ENCODE measurements at regions of chr3 and their contacts with region 1.

Region 1: DNA sequence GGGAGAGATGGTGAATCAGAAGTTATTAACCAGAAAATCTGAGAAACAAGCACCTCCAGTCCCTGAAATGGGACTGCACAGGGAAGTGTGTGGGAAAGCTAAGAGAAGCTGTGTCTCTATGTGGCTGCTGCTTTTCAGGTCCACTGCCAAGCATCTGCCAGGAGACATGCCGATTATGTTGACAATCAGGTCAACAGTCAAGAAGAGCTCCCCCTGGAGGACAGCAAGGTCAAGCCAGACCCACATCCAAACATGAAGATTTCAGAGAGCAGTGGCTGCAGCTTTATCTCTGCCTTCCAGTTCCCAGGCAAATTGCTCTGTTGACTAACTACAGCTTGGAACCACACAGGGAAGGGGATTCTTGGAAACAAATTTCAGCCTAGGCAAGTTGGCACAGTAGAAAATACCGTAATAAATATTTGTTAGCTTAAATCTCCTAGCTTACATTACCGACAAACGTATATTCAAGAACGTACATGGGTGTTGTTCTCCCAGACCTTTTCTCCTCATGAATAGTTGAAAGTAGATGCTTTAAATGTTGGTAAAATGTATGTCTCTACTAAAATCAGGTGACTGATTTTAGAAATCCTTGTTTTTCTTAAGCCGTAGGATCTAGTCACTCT is 394.5 kb upstream of the RARB start:
- DNase-seq: peak; percentile 34
- H3K4me3 Mint-ChIP-seq: no peak overlapping the region
- H3K27ac Mint-ChIP-seq: no peak overlapping the region
- H3K4me1 Mint-ChIP-seq: no peaks in the 10 kb centered on the region
- H3K27me3 Mint-ChIP-seq: no peaks in the 10 kb centered on the region

Region 2: DNA sequence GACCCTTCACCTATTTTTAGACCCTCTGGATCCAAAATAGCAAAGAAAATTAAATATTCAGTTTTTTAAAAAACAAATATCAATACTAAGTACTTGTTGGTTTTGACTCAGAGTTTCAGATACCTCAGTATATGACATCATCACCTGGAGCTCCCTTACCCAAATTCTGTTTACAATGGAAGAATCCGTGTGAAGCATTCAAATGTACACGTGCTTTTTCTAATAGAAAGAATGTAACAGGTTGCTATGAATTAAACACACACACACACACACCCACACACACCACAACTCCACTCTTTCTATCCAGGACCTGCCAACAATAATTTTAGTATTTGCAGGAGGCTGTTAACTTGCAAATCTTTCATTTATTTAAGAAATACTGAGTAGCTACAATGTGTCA is 760.6 kb before region 1 on chr3:
- CTCF ChIA-PET with region 1: no interaction called
- intact Hi-C with region 1: no loop called
- DNase-seq: no peak
- H3K4me3 Mint-ChIP-seq: no peak overlapping the region
- H3K27ac Mint-ChIP-seq: no peak overlapping the region
- H3K4me1 Mint-ChIP-seq: no peaks in the 10 kb centered on the region
- H3K27me3 Mint-ChIP-seq: peaks cover 11% of the 10 kb centered on the region

Region 3: DNA sequence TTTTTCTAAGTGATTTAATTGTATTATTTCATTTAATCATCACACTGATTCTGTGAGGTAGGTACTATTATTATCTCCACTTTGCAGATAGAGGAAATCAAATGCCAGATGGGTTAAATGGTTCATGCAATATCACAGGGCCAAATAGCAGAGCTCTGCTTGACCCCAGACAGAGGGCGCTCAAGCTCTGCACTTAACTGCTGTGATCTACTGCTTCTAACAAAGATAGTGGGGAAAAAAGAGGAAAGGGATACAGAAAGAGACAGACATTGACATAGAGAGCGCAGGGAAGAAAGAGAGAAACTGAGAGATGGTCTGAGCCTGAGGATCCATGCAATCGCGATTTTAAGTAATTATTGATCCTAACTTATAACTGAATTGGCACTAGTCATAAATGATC is 259.7 kb before region 1 on chr3:
- CTCF ChIA-PET with region 1: no interaction called
- intact Hi-C with region 1: loop called (anchors 5 kb)
- DNase-seq: peak; percentile 48
- H3K4me3 Mint-ChIP-seq: no peak overlapping the region
- H3K27ac Mint-ChIP-seq: no peak overlapping the region
- H3K4me1 Mint-ChIP-seq: no peaks in the 10 kb centered on the region
- H3K27me3 Mint-ChIP-seq: no peaks in the 10 kb centered on the region

Region 4: DNA sequence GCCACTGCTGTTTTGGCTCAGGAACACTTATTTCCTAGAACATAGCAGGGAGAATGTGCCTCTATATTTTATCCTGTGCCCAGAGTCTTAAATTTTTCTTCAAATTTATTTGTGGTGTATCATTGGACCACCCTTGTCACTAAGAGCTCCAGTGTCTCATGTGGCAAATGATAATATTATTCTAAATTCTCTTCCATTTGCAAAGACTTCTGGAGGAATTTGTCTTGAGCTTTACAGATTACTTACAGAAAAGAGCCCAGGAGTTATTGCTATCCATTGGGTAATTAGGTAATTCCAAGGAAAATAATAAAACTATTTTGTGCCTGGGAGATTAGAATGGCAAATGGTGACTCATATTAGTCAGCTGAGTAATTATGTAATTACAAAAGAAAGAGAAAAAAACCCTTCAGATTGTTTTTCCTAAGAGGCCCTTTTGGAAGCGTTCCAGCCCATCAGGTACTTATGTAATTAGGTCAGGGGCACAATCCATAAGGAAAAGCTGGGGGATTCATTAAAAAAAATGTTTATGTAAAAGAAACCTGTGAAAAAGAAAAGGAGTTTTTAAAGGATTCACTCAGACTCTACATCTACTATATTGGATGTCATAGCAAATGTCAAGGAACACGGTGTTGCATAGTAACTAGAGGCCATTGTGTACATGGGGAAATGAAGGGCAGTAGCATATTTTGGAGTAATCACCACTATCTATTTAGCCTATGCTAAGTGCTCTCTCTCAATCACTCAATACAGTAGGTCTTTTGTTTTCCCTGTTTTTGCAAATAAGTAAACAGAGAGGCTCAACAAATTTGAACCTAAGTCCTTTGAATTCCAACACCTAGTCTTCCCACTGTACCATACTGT is 13.6 kb after region 1 on chr3:
- CTCF ChIA-PET with region 1: interaction called, 10 read pairs
- intact Hi-C with region 1: no loop called
- DNase-seq: no peak
- H3K4me3 Mint-ChIP-seq: no peak overlapping the region
- H3K27ac Mint-ChIP-seq: no peak overlapping the region
- H3K4me1 Mint-ChIP-seq: no peaks in the 10 kb centered on the region
- H3K27me3 Mint-ChIP-seq: no peaks in the 10 kb centered on the region

Region 5: DNA sequence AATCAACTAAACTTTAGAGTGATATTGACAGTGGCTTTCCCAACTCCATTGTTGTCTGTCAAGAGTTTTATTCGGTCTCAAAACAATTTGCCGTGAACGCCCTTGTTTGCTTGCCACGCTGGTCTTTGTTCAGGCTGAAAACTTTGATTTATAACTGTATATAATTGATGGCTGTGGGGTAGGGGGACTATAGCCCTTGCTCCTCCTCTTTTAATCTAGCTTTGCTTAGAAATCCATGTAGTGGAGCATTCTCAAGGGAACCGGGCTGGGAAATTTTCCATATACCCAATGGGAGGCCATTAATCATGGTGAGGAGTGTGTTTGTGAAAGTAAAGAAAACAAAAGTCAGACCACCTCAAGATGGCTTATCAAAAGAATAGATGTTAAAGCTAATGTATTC is 54.8 kb after region 1 on chr3:
- CTCF ChIA-PET with region 1: no interaction called
- intact Hi-C with region 1: no loop called
- DNase-seq: no peak
- H3K4me3 Mint-ChIP-seq: no peak overlapping the region
- H3K27ac Mint-ChIP-seq: no peak overlapping the region
- H3K4me1 Mint-ChIP-seq: no peaks in the 10 kb centered on the region
- H3K27me3 Mint-ChIP-seq: no peaks in the 10 kb centered on the region

Measured in activated naive CD4-positive, alpha-beta T cell treated with anti-CD3 and anti-CD28 coated beads for 36 hours (primary cell).